PC-9 (cell line): ENCODE measurements at regions of chr3 and their contacts with region 1.

Region 1: GRCh38 chr3:159763602-159764489 is 224.8 kb upstream of the IL12A start:
- DNase-seq: peak; percentile 75 to 98
- H3K4me3 ChIP-seq: peak overlapping the region; percentile 61
- H3K27ac ChIP-seq: peak overlapping the region; percentile 84
- H3K4me1 ChIP-seq: peaks cover 42% of the 10 kb centered on the region
- H3K27me3 ChIP-seq: no peaks in the 10 kb centered on the region
- CTCF ChIP-seq: no peak; the same call in 1 of the 2 replicates

Region 2: GRCh38 chr3:159378396-159379194 is 385.3 kb before region 1 on chr3:
- CTCF ChIA-PET with region 1: no interaction called
- POLR2A ChIA-PET with region 1: interaction called, 14 read pairs
- intact Hi-C with region 1: no loop called
- DNase-seq: no peak
- H3K4me3 ChIP-seq: no peak overlapping the region
- H3K27ac ChIP-seq: no peak overlapping the region
- H3K4me1 ChIP-seq: no peaks in the 10 kb centered on the region
- H3K27me3 ChIP-seq: no peaks in the 10 kb centered on the region
- CTCF ChIP-seq: no peak

Region 3: GRCh38 chr3:159616212-159616825 is 147.5 kb before region 1 on chr3:
- CTCF ChIA-PET with region 1: interaction called, 18 read pairs
- POLR2A ChIA-PET with region 1: interaction called, 10 read pairs
- intact Hi-C with region 1: loop called (anchors 1 kb)
- DNase-seq: peak; percentile 43 to 69
- H3K4me3 ChIP-seq: no peak overlapping the region
- H3K27ac ChIP-seq: no peak overlapping the region
- H3K4me1 ChIP-seq: peaks cover 16% of the 10 kb centered on the region
- H3K27me3 ChIP-seq: no peaks in the 10 kb centered on the region
- CTCF ChIP-seq: peak; percentile 80

Region 4: GRCh38 chr3:159787191-159787590 is 23.3 kb after region 1 on chr3:
- CTCF ChIA-PET with region 1: interaction called, 8 read pairs
- POLR2A ChIA-PET with region 1: interaction called, 6 read pairs
- intact Hi-C with region 1: loop called (anchors 1 kb)
- DNase-seq: peak; percentile 82 to 98
- H3K4me3 ChIP-seq: peak overlapping the region; percentile 30; the same call in 1 of the 2 replicates
- H3K27ac ChIP-seq: peak overlapping the region; percentile 90
- H3K4me1 ChIP-seq: peaks cover 64% of the 10 kb centered on the region
- H3K27me3 ChIP-seq: no peaks in the 10 kb centered on the region
- CTCF ChIP-seq: no peak

Region 5: GRCh38 chr3:159854500-159855124 is 90.8 kb after region 1 on chr3:
- CTCF ChIA-PET with region 1: no interaction called
- POLR2A ChIA-PET with region 1: interaction called, 5 read pairs
- intact Hi-C with region 1: loop called (anchors 1 kb)
- DNase-seq: peak; percentile 64 to 99
- H3K4me3 ChIP-seq: peak overlapping the region; percentile 22; the same call in 1 of the 2 replicates
- H3K27ac ChIP-seq: peak overlapping the region; percentile 71
- H3K4me1 ChIP-seq: peaks cover 38% of the 10 kb centered on the region
- H3K27me3 ChIP-seq: no peaks in the 10 kb centered on the region
- CTCF ChIP-seq: no peak

Region 6: DNA sequence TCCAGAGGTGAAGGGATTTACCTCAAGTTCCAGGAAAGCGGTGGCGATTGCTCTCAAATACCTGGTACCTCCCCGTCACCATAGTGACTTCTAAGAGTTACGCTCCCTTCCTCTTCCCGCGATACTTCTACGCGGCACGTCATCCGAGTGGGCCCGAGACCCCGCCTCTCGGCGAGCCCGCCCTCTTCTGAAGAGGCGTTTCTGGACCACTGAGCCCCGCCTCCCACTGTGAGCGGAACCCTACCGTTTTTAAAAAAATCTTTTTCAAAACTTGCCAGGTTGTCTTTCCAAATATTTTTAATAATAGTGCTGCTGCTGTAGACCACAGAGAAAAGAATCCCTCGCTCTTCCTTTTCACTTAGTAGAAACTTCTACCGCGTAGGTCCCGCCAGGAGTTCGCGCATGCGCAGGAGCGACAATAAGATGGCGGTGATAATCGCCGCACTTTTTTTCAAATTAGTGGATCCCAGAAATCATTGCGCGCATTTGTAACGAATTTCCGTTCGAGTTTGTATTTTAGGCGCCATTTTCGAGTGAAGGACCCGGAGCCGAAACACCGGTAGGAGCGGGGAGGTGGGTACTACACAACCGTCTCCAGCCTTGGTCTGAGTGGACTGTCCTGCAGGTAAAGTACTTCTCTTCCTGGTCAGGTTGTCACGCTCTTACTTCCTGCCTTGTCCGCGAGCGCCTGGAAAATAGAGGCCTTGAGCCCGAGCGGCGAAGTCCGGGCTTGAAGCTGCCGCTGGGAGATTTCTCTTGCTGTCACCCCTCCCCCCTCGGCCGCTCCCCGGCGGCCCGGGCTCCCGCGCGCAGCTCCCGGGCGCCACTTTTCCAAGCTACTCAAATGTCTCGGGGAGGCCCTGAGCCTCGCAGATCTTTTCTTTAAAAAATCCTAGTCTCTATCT is 635.5 kb after region 1 on chr3 and contains the starts of genes IFT80 and SMC4:
- CTCF ChIA-PET with region 1: no interaction called
- POLR2A ChIA-PET with region 1: interaction called, 5 read pairs
- intact Hi-C with region 1: loop called (anchors 1 kb)
- DNase-seq: peak; percentile 91 to 98
- H3K4me3 ChIP-seq: peak within 1 kb of the TSS; percentile 90
- H3K27ac ChIP-seq: peak within 1 kb of the TSS; percentile 67
- H3K4me1 ChIP-seq: peaks cover 32% of the 10 kb centered on the region
- H3K27me3 ChIP-seq: no peaks in the 10 kb centered on the region
- CTCF ChIP-seq: no peak
- total RNA-seq, gene IFT80: 47.9 and 59.4 TPM in 2 replicates
- total RNA-seq, gene SMC4: 138 and 181 TPM in 2 replicates

Region 7: GRCh38 chr3:160486459-160486869 is 722.6 kb after region 1 on chr3:
- CTCF ChIA-PET with region 1: no interaction called
- POLR2A ChIA-PET with region 1: no interaction called
- intact Hi-C with region 1: no loop called
- DNase-seq: no peak
- H3K4me3 ChIP-seq: no peak overlapping the region
- H3K27ac ChIP-seq: no peak overlapping the region
- H3K4me1 ChIP-seq: no peaks in the 10 kb centered on the region
- H3K27me3 ChIP-seq: no peaks in the 10 kb centered on the region
- CTCF ChIP-seq: peak; percentile 85